ENCODE measurements at regions of chr2 and their contacts with region 1.

Region 1: GRCh38 chr2:54665436-54665856 is 58.0 kb upstream of the EML6 start:
- DNase-seq: peak; percentile 47
- H3K4me3 Mint-ChIP-seq: no peak overlapping the region
- H3K27ac Mint-ChIP-seq: no peak overlapping the region
- H3K4me1 Mint-ChIP-seq: peaks cover 18% of the 10 kb centered on the region
- H3K27me3 Mint-ChIP-seq: no peaks in the 10 kb centered on the region

Region 2: GRCh38 chr2:54522624-54523281 is 142.7 kb before region 1 on chr2:
- CTCF ChIA-PET with region 1: interaction called, 44 read pairs
- POLR2A ChIA-PET with region 1: no interaction called
- DNase-seq: peak; percentile 64
- H3K4me3 Mint-ChIP-seq: no peak overlapping the region
- H3K27ac Mint-ChIP-seq: peak overlapping the region; percentile 33
- H3K4me1 Mint-ChIP-seq: peaks cover 17% of the 10 kb centered on the region
- H3K27me3 Mint-ChIP-seq: peaks cover 17% of the 10 kb centered on the region

Region 3: GRCh38 chr2:54531558-54531957 is 133.9 kb before region 1 on chr2:
- CTCF ChIA-PET with region 1: interaction called, 14 read pairs
- POLR2A ChIA-PET with region 1: no interaction called
- DNase-seq: no peak
- H3K4me3 Mint-ChIP-seq: no peak overlapping the region
- H3K27ac Mint-ChIP-seq: no peak overlapping the region
- H3K4me1 Mint-ChIP-seq: peaks cover 14% of the 10 kb centered on the region
- H3K27me3 Mint-ChIP-seq: peaks cover 9% of the 10 kb centered on the region

Region 4: GRCh38 chr2:54680397-54681041 is 15.1 kb after region 1 on chr2:
- CTCF ChIA-PET with region 1: interaction called, 34 read pairs
- POLR2A ChIA-PET with region 1: interaction called, 4 read pairs
- DNase-seq: peak; percentile 52
- H3K4me3 Mint-ChIP-seq: peak overlapping the region; percentile 69
- H3K27ac Mint-ChIP-seq: peak overlapping the region; percentile 60
- H3K4me1 Mint-ChIP-seq: peaks cover 46% of the 10 kb centered on the region
- H3K27me3 Mint-ChIP-seq: peaks cover 63% of the 10 kb centered on the region

Region 5: GRCh38 chr2:54691445-54692135 is 26.1 kb after region 1 on chr2:
- CTCF ChIA-PET with region 1: interaction called, 18 read pairs
- POLR2A ChIA-PET with region 1: no interaction called
- DNase-seq: no peak
- H3K4me3 Mint-ChIP-seq: no peak overlapping the region
- H3K27ac Mint-ChIP-seq: no peak overlapping the region
- H3K4me1 Mint-ChIP-seq: peaks cover 18% of the 10 kb centered on the region
- H3K27me3 Mint-ChIP-seq: peaks cover 53% of the 10 kb centered on the region

Region 6: DNA sequence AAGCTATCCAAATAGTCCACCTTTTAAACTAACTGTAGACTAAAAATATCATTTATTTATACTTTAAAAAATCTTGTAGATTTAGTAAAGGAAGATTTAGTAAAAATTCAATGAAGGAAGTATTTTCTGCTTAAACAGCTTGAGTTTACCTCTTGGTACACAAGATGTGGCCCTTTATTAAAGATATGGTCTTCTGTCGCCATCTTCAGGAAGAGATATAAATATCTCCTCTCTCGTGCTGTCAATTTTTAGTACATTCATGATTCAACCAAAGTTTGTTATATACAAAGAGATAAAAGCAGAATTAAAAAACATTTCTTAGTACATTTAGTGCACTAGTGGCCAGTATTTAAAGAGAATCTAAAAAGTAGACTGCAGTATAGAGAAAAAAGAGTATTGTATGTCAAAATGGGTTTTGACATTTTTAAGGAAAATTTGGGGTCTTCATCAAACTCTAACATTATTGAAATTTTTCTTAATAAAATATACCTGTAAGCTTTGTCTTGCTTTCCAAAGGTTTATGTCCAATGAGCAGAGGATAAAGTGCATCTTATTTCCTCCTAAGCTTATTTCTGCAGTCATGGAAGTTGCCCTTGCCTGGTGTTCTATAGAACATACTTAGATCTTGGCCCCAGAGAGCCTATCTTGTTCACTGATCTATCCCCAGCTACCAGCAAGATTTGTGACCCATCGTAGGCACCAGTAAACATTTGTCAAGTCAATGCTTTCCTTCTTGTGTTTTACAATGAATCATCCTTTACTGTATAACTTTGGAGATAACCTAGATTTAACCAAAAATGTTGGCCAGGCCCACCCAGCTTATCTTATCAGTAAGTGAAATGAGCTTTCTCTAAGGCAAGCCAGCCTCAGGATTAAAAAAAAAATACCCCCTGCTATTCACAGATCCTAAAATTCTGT is 39.5 kb after region 1 on chr2:
- CTCF ChIA-PET with region 1: interaction called, 78 read pairs
- POLR2A ChIA-PET with region 1: interaction called, 6 read pairs
- DNase-seq: no peak
- H3K4me3 Mint-ChIP-seq: no peak overlapping the region
- H3K27ac Mint-ChIP-seq: no peak overlapping the region
- H3K4me1 Mint-ChIP-seq: peaks cover 9% of the 10 kb centered on the region
- H3K27me3 Mint-ChIP-seq: peaks cover 56% of the 10 kb centered on the region

Region 7: DNA sequence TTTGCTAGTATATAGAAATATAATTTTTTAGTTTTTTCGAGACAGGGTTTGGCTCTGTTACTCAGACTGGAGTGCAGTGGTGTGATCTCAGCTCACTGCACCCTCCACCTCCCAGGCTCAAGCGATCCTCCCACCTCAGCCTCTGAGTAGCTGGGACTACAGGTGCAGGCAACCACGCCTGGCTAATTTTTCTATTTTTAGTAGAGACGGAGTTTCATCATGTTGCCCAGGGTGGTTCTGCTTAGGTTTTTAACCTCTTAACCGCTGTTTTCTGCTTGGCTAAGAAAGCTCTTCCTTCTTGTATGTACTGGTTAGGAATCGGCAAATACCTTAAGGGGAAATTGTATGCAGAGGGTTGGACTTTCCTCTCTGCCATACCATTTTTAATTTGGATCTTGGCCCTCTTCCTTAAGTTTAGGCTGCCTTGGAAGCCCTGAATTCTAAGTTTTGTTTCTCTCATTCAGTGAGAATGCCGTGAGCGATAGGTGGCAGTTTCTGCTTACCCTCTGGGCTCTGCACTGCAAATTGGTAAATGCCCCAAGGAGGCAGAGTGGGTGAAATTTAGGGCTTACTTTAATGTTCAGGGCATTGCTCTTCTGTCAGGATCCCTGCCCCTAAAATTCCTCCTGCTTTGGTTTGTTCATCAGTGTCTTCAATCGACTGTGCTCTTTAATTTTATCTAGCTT is 90.3 kb after region 1 on chr2:
- CTCF ChIA-PET with region 1: no interaction called
- POLR2A ChIA-PET with region 1: no interaction called
- DNase-seq: no peak
- H3K4me3 Mint-ChIP-seq: no peak overlapping the region
- H3K27ac Mint-ChIP-seq: no peak overlapping the region
- H3K4me1 Mint-ChIP-seq: peaks cover 7% of the 10 kb centered on the region
- H3K27me3 Mint-ChIP-seq: peaks cover 10% of the 10 kb centered on the region

Region 8: DNA sequence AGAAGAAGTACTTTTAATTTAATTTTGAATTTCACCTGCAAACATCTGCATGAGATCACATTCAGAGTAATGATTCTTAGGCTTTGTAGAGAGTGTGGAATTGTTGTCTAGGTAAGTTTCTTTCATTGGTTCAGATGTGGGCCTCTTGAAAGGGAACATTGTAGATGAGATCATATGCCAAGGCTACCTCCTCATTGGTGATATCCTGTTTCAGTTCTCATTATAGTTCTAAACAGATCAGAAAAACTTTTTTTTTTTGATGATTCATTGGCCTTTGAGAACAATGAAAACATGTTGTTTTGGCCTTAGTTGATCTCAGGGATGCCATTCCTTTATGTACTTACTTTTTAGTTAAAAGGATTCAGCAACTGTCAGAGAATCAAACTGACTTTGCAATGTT is 102.5 kb after region 1 on chr2:
- CTCF ChIA-PET with region 1: no interaction called
- POLR2A ChIA-PET with region 1: no interaction called
- DNase-seq: no peak
- H3K4me3 Mint-ChIP-seq: no peak overlapping the region
- H3K27ac Mint-ChIP-seq: no peak overlapping the region
- H3K4me1 Mint-ChIP-seq: peaks cover 3% of the 10 kb centered on the region
- H3K27me3 Mint-ChIP-seq: peaks cover 1% of the 10 kb centered on the region

Region 9: DNA sequence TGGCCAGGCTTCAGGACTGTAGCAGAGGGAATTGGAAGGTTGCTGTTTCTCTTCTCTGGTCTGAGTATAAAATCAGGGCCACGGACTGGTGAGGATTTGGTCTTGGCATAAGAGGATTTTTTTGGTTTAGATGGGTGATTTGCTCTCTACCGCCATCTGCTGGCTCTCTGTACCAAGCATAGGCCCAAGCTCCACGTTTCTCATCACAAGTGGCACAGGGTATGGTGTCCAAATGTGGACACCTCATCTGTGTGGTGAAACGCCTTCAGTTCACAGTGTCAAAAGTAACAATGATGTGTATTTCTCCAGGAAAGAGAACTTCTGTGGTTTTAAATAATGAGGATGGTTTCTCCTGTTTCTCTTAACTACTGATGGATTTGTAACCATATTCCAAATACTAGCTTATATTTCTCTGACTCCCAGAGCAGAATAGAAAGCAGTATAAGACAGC is 173.2 kb after region 1 on chr2:
- CTCF ChIA-PET with region 1: interaction called, 22 read pairs
- POLR2A ChIA-PET with region 1: no interaction called
- DNase-seq: peak; percentile 66
- H3K4me3 Mint-ChIP-seq: no peak overlapping the region
- H3K27ac Mint-ChIP-seq: no peak overlapping the region
- H3K4me1 Mint-ChIP-seq: no peaks in the 10 kb centered on the region
- H3K27me3 Mint-ChIP-seq: no peaks in the 10 kb centered on the region

Region 10: DNA sequence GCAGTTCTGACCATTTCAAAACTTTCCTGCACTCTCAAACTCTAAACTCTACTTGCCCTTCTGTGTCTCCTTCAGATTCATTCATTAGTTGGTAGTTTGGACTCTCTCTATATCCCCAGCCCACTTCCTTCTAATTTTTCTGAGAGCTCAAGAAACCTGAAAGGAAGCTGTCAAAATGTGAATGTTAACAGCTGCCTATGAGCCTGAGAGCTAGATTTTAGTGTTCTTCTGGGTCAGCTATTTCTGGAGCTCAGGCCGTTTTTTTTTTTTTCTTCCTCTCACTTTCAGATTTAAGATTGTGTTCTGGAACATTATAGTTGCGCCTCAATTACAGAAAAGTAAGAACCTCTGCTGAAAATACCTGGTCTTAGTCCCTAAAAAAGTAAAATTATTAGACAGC is 311.7 kb after region 1 on chr2:
- CTCF ChIA-PET with region 1: no interaction called
- POLR2A ChIA-PET with region 1: no interaction called
- DNase-seq: no peak
- H3K4me3 Mint-ChIP-seq: no peak overlapping the region
- H3K27ac Mint-ChIP-seq: no peak overlapping the region
- H3K4me1 Mint-ChIP-seq: peaks cover 17% of the 10 kb centered on the region
- H3K27me3 Mint-ChIP-seq: no peaks in the 10 kb centered on the region